ENCODE measurements at regions of chr5 and their contacts with region 1.

Region 1: GRCh38 chr5:143355720-143356119 is 47.8 kb downstream of the NR3C1 start:
- DNase-seq: no peak
- H3K4me3 Mint-ChIP-seq: no peak overlapping the region
- H3K27ac Mint-ChIP-seq: no peak overlapping the region
- H3K4me1 Mint-ChIP-seq: peaks cover 55% of the 10 kb centered on the region
- H3K27me3 Mint-ChIP-seq: no peaks in the 10 kb centered on the region

Region 2: DNA sequence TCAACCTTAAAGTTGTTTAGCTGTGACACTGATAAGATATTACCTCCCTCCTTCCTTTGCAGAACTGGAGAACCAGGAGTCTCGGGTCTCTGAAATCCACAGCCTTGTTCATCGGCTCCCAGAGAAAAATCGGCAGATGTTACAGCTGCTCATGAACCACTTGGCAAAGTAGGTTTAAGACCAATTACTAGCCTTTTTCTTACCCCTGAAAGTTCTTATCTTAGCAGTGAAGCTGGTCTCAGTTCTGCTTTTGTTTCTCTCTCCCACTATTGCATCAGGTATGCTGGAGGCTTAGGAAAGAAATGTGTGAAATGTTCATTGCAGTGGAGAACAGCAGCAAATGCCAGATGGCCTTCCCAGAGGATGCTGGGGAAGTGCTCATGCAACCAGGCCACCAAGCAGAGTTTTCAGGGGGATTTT is 298.1 kb before region 1 on chr5:
- intact Hi-C with region 1: loop called (anchors 5 kb)
- DNase-seq: no peak
- H3K4me3 Mint-ChIP-seq: no peak overlapping the region
- H3K27ac Mint-ChIP-seq: peak overlapping the region; percentile 96
- H3K4me1 Mint-ChIP-seq: peaks cover 67% of the 10 kb centered on the region
- H3K27me3 Mint-ChIP-seq: no peaks in the 10 kb centered on the region

Region 3: GRCh38 chr5:143182901-143183820 is 172.6 kb before region 1 on chr5:
- intact Hi-C with region 1: loop called (anchors 2 kb)
- DNase-seq: peak; percentile 33
- H3K4me3 Mint-ChIP-seq: peak overlapping the region; percentile 43
- H3K27ac Mint-ChIP-seq: peak overlapping the region; percentile 82
- H3K4me1 Mint-ChIP-seq: peaks cover 61% of the 10 kb centered on the region
- H3K27me3 Mint-ChIP-seq: no peaks in the 10 kb centered on the region

Region 4: DNA sequence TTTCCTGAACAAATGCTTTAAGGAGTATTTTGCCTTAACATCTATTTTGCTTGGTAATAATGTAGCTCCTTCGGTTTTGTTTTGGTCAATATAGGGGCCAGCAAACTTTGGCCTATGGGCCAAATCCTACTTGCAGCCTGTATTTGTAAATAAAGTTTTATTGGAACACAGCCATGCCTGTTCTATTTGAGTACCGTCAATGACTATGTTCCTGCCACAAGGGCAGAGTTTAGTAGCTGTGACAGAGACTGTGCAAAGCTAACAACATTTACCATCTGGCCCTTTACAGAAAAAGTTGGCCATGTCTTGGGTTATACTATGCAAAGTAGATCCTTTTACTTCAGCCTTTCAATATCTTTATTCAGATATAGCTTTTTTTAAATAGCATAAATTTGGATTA is 65.6 kb before region 1 on chr5:
- intact Hi-C with region 1: no loop called
- DNase-seq: no peak
- H3K4me3 Mint-ChIP-seq: no peak overlapping the region
- H3K27ac Mint-ChIP-seq: no peak overlapping the region
- H3K4me1 Mint-ChIP-seq: no peaks in the 10 kb centered on the region
- H3K27me3 Mint-ChIP-seq: no peaks in the 10 kb centered on the region

Region 5: DNA sequence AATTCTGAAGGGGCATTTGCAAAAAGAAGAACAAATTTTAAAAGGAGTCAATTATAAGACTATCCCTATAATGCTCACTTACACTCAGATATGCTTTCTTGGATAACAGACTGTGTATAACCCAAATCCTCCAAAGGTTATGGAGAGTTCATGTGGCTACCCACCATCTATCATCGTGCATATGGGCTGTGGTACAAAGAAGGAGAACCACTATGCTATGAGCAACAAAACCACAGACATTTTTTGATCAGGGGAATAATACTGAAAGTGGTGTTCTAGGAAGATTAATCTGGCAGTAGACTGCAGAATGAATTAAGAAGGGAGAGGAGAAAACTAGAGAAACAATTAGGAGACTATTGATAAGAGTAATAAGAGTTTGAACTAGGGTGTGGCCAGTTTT is 31.0 kb after region 1 on chr5:
- intact Hi-C with region 1: loop called (anchors 2 kb)
- DNase-seq: no peak
- H3K4me3 Mint-ChIP-seq: no peak overlapping the region
- H3K27ac Mint-ChIP-seq: no peak overlapping the region
- H3K4me1 Mint-ChIP-seq: peaks cover 35% of the 10 kb centered on the region
- H3K27me3 Mint-ChIP-seq: no peaks in the 10 kb centered on the region

Region 6: GRCh38 chr5:143693651-143694252 is 338.0 kb after region 1 on chr5:
- intact Hi-C with region 1: loop called (anchors 5 kb)
- DNase-seq: peak; percentile 11
- H3K4me3 Mint-ChIP-seq: no peak overlapping the region
- H3K27ac Mint-ChIP-seq: peak overlapping the region; percentile 68
- H3K4me1 Mint-ChIP-seq: peaks cover 57% of the 10 kb centered on the region
- H3K27me3 Mint-ChIP-seq: no peaks in the 10 kb centered on the region

Measured in activated T-helper 2 cell treated with anti-CD3 and anti-CD28 coated beads, Interferon-gamma antibody, Interleukin-2, Interleukin-4, amounts not matched to agents 10 μg/mL and 5 μg/mL and 100 μg/mL, durations not matched to agents 14 hours and 24 hours and 36 hours (primary cell).